A549 (cell line): ENCODE measurements at regions of chr1 and their contacts with region 1.

Region 1: DNA sequence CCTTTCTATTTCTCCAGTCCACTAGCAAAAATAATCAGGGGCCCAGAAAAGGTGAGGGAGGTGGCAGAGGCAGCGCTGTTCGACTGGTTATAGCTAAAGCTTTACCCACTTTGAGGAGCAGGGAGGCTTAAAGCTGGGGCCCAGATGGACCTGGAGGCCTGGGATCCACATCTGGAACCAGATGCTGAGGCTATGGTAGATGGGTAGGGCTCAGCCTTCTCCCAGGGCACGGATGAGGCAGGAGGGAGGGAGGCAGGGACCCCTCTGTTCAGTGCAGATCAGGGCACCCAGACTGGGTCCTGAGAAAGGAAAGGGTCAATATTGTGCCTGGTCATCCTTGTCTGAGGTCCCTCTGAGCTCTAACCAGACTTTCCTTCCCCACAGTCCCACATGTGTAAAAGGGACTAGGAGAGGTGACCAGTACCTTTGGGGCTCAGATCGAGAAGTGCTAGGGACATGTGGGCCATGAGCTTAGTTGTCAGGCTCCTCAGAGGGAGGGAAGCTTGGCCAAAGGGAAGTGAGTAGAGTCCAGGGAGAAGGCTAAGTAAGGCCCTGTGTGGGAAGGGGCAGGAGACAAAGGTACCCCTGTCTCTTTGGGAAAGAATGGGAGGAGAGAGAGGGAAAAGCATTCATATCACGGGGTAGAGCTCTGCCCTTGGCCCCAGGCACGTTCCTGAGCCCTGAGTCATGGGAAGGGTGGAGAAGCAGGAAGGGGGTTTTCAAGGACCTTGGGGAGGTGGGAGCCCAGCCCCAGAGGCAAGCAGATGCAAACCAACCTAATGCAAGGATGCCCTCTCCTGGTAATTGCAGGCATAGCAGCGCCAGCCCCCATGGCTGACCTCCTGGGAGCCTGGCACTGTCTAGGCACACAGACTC is 15.4 kb downstream of the LMNA start:
- DNase-seq: peak; percentile 76 to 96
- ATAC-seq: peak; percentile 62 to 67
- H3K4me3 ChIP-seq: no peak overlapping the region
- H3K27ac ChIP-seq: peak overlapping the region; percentile 95 to 98
- H3K4me1 ChIP-seq: peaks cover 57% of the 10 kb centered on the region
- CTCF ChIP-seq: peak; percentile 96
- EP300 ChIP-seq: no peak; a peak in 1 of 5 replicates
- POLR2A ChIP-seq: peak; percentile 19; the same call in 1 of the 2 replicates
- RAD21 ChIP-seq: peak; percentile 99

Region 2: DNA sequence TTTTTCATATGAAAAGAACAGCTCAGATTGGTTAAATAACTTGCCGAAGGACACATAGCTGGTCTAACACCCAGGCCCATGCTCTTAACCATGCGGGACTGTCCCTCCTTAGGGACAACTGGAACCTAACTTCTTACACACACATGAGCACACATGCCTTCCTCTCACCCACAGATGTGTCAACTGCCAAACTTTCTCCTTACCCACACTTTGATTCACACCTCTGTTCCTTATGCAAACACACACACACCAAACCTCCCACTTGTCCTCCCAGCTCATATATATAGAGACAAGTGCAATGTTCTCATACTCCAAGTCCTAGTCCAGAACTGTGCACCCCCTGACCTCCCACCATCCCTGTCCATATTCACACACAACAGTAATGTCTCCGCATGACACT is 64.7 kb before region 1 on chr1:
- CTCF ChIA-PET with region 1: interaction called, 10 read pairs
- POLR2A ChIA-PET with region 1: no interaction called
- DNase-seq: no peak
- ATAC-seq: no peak
- H3K4me3 ChIP-seq: no peak overlapping the region
- H3K27ac ChIP-seq: no peak overlapping the region
- H3K4me1 ChIP-seq: no peaks in the 10 kb centered on the region; the same call in 2 of the 3 replicates
- CTCF ChIP-seq: no peak
- EP300 ChIP-seq: no peak
- POLR2A ChIP-seq: no peak
- RAD21 ChIP-seq: no peak

Region 3: GRCh38 chr1:156096640-156097391 is 33.1 kb before region 1 on chr1:
- CTCF ChIA-PET with region 1: interaction called, 2,239 read pairs
- POLR2A ChIA-PET with region 1: interaction called, 17 read pairs
- DNase-seq: peak; percentile 86 to 93
- ATAC-seq: peak; percentile 96 to 97
- H3K4me3 ChIP-seq: no peak overlapping the region
- H3K27ac ChIP-seq: peak overlapping the region; percentile 91 to 93
- H3K4me1 ChIP-seq: peaks cover 44% of the 10 kb centered on the region
- CTCF ChIP-seq: peak; percentile 95
- EP300 ChIP-seq: no peak
- POLR2A ChIP-seq: no peak
- RAD21 ChIP-seq: peak; percentile 98 to 99

Region 4: DNA sequence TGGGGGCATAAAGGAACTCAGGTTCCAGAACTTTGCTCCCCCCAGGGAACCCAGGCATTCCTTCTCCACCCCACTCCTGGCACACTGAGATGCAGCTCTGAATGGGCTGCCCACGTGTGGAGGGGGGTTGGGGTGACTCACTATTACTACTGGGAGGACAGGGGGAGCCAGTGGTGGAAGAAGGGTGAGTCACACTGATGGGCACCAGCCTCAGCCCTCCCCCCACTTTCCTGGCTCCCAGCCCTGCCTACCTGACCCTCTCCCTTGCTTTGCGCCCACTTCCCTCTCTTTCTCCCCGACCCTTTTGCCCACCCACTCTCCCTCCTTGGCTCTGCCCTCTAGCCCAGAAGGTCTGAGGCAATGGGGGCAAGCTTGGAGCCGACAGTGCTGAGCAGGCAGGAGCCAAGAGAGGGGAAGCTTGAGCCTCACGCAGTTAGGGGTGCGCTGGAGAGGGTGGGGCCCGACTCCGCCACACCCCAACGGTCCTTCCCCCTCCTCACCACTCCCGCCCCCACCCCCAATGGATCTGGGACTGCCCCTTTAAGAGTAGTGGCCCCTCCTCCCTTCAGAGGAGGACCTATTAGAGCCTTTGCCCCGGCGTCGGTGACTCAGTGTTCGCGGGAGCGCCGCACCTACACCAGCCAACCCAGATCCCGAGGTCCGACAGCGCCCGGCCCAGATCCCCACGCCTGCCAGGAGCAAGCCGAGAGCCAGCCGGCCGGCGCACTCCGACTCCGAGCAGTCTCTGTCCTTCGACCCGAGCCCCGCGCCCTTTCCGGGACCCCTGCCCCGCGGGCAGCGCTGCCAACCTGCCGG is 15.6 kb before region 1 on chr1 and contains the start of gene LMNA:
- CTCF ChIA-PET with region 1: interaction called, 2,239 read pairs
- POLR2A ChIA-PET with region 1: interaction called, 108 read pairs
- DNase-seq: peak; percentile 96 to 98
- ATAC-seq: peak; percentile 83 to 84
- H3K4me3 ChIP-seq: peak within 1 kb of the TSS; percentile 99
- H3K27ac ChIP-seq: peak within 1 kb of the TSS; percentile 95 to 98
- H3K4me1 ChIP-seq: peaks cover 51% of the 10 kb centered on the region
- CTCF ChIP-seq: no peak
- EP300 ChIP-seq: peak; percentile 7 to 43; a peak in 1 of 5 replicates
- POLR2A ChIP-seq: peak; percentile 97
- RAD21 ChIP-seq: 0 out of 5 replicates have a peak, but pooled peaks of 1 of the 2 experiments have one; percentile 6
- polyA plus RNA-seq, gene LMNA: 155 and 214 TPM in 2 replicates

Region 5: DNA sequence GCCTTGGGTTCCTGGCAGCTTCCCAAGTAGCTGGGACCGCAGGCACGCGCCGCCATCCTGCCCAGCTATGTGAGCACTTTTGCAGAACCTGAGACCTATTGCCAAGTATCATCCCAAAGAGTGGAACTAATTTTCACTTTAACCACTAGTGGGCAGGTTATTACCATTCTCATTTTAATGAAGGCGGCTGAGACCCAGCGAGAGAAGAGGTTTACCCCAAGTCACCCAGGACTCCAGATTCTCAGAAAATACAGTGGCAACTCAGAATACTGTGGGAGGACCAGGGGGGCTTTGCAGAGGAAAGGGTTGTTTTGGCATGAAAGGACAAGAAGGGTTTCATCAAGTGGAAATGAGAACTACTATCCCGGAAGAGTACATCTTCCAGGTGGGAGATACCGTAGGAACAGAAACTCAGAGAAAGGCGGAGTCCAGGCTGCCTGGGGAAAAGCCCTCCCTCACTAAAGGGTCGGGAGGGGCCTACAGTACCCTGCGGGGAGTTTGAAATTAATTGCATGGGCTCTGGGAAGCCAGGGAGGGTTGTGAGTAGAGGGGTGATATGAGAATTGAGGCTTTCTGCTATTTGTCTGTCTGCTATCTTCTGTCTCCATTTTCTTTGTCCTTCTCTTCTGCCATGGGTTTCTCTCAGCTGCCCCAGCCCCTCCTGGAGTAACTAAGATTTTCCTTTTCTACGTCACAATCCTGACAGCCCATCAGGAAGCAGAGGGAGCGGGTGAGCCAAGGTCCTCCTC is 16.2 kb after region 1 on chr1:
- CTCF ChIA-PET with region 1: interaction called, 42 read pairs
- POLR2A ChIA-PET with region 1: no interaction called
- DNase-seq: peak; percentile 76 to 85
- ATAC-seq: peak; percentile 35 to 39
- H3K4me3 ChIP-seq: no peak overlapping the region
- H3K27ac ChIP-seq: peak overlapping the region; percentile 34 to 72
- H3K4me1 ChIP-seq: peaks cover 20% of the 10 kb centered on the region
- CTCF ChIP-seq: peak; percentile 76
- EP300 ChIP-seq: no peak
- POLR2A ChIP-seq: no peak
- RAD21 ChIP-seq: peak; percentile 90 to 91

Region 6: DNA sequence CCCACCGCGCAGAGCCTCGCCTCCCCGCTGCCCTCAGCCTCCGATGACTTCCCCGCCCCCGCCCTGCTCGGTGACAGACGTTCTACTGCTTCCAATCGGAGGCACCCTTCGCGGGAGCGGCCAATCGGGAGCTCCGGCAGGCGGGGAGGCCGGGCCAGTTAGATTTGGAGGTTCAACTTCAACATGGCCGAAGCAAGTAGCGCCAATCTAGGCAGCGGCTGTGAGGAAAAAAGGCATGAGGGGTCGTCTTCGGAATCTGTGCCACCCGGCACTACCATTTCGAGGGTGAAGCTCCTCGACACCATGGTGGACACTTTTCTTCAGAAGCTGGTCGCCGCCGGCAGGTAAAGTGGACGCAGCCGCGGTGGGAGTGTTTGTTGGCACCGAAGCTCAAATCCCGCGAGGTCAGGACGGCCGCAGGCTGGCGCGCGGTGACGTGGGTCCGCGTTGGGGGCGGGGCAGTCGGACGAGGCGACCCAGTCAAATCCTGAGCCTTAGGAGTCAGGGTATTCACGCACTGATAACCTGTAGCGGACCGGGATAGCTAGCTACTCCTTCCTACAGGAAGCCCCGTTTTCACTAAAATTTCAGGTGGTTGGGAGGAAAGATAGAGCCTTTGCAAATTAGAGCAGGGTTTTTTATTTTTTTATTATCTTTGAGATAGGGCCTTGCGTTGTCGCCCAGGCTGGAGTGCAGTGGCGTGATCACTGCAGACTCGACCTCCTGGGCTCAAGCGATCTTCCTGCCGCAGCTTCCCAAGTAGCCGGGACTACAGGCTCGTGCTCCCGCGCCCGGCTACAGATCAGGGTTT is 83.1 kb after region 1 on chr1 and contains the start of gene PMF1:
- CTCF ChIA-PET with region 1: interaction called, 639 read pairs
- POLR2A ChIA-PET with region 1: interaction called, 11 read pairs
- DNase-seq: peak; percentile 96 to 100
- ATAC-seq: peak; percentile 98
- H3K4me3 ChIP-seq: peak within 1 kb of the TSS; percentile 65
- H3K27ac ChIP-seq: peak within 1 kb of the TSS; percentile 93 to 96
- H3K4me1 ChIP-seq: peaks cover 13% of the 10 kb centered on the region; the same call in 2 of the 3 replicates
- CTCF ChIP-seq: no peak
- EP300 ChIP-seq: no peak
- POLR2A ChIP-seq: peak; percentile 67
- RAD21 ChIP-seq: no peak
- polyA plus RNA-seq, gene PMF1: 61.4 and 63.9 TPM in 2 replicates